PC-9 (cell line): ENCODE measurements at regions of chr20 and their contacts with region 1.

Region 1: GRCh38 chr20:56820816-56821440 is 191.8 kb downstream of the TFAP2C start:
- DNase-seq: no peak
- H3K4me3 ChIP-seq: no peak overlapping the region
- H3K27ac ChIP-seq: no peak overlapping the region
- H3K4me1 ChIP-seq: peaks cover 1% of the 10 kb centered on the region; the same call in 1 of the 2 replicates
- H3K27me3 ChIP-seq: no peaks in the 10 kb centered on the region
- CTCF ChIP-seq: no peak

Region 2: GRCh38 chr20:56750430-56750829 is 70.5 kb before region 1 on chr20:
- CTCF ChIA-PET with region 1: no interaction called
- POLR2A ChIA-PET with region 1: interaction called, 13 read pairs
- intact Hi-C with region 1: no loop called
- DNase-seq: no peak
- H3K4me3 ChIP-seq: no peak overlapping the region
- H3K27ac ChIP-seq: no peak overlapping the region
- H3K4me1 ChIP-seq: peaks cover 41% of the 10 kb centered on the region
- H3K27me3 ChIP-seq: no peaks in the 10 kb centered on the region
- CTCF ChIP-seq: no peak